K562 (cell line): ENCODE measurements at regions of chr20 and their contacts with region 1.

Region 1: DNA sequence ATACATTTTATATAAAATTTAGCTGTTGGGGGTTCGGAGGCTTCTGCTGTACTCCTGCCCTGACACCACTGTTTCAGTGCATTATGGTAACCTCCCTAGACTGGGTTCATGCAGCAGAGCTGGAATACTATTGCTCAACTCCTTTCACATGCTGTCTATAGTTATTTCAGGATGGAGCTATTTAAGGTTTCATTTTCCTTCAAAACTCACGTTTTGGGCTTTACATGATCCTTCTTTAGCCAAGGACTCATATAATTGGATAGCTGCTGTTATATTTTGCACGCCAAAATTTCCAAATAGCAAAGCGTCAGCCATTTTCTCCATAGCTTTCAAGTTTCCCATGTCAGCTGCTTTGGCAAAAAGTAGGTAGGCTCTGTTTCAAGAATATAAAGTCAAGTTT is 76.8 kb downstream of the SEL1L2 start:
- DNase-seq: no peak
- ATAC-seq: no peak
- H3K4me3 ChIP-seq: no peak overlapping the region
- H3K27ac ChIP-seq: no peak overlapping the region
- H3K4me1 ChIP-seq: peaks cover 0 to 7% of the 10 kb centered on the region in 2 experiments; a peak in 1 of 5 replicates
- H3K27me3 ChIP-seq: no peaks in the 10 kb centered on the region
- CTCF ChIP-seq: no peak
- EP300 ChIP-seq: no peak
- POLR2A ChIP-seq: no peak
- RAD21 ChIP-seq: no peak

Region 2: DNA sequence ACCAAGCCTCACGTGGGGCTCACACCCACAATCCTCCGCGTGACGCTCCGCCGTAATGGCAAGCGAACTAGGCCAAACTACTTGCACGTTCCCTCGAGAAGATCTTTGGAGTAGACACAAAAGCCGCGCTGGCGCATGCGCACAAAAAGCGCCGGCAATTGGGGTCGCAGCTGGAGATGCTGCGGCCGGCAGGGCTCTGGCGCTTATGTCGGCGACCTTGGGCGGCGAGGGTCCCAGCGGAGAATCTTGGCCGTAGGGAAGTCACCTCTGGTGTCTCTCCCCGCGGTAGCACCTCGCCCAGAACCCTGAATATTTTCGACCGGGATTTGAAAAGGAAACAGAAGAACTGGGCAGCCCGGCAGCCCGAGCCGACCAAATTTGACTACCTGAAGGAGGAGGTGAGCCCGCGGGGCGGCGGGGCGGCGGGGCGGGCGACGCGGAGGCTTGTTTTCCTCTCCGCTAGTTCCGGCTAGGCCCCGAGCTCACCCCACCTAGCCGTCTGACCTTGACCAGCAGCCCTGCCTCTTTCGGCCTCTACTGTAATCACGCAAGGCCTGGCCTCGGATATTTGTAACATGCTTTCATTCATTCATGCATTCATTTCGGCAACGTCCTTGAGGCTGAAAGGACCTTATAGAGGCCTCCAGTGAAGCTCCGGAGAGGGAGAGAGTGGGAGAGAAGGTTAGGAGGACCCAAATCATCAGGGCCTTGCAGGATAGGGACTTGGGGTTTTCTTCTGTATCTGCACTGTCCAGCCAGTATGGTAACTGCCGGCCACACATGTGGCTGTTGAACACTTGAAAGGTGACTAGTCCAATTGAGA is 128.5 kb before region 1 on chr20 and contains the starts of genes ESF1 and NDUFAF5:
- CTCF ChIA-PET with region 1: no interaction called
- POLR2A ChIA-PET with region 1: no interaction called
- in situ Hi-C with region 1: no loop called
- intact Hi-C with region 1: loop called (anchors 5 kb)
- DNase-seq: peak; percentile 74 to 95 (median 80)
- ATAC-seq: peak; percentile 92
- H3K4me3 ChIP-seq: peak within 1 kb of the TSS; percentile 73
- H3K27ac ChIP-seq: peak within 1 kb of the TSS; percentile 90
- H3K4me1 ChIP-seq: peaks cover 3 to 5% of the 10 kb centered on the region in 2 experiments; a peak in 3 of 5 replicates
- H3K27me3 ChIP-seq: no peaks in the 10 kb centered on the region
- CTCF ChIP-seq: no peak
- EP300 ChIP-seq: no peak; the same call in 1 of the 2 replicates
- POLR2A ChIP-seq: peak; percentile 79
- RAD21 ChIP-seq: no peak
- polyA plus RNA-seq, gene ESF1: 14.7 to 15.8 TPM
- polyA plus RNA-seq, gene NDUFAF5: 27.3 to 32.3 TPM

Region 3: GRCh38 chr20:14178952-14179351 is 265.4 kb after region 1 on chr20:
- CTCF ChIA-PET with region 1: no interaction called
- POLR2A ChIA-PET with region 1: no interaction called
- in situ Hi-C with region 1: no loop called
- intact Hi-C with region 1: no loop called
- DNase-seq: no peak
- ATAC-seq: no peak
- H3K4me3 ChIP-seq: no peak overlapping the region
- H3K27ac ChIP-seq: no peak overlapping the region
- H3K4me1 ChIP-seq: no peaks in the 10 kb centered on the region
- H3K27me3 ChIP-seq: no peaks in the 10 kb centered on the region
- CTCF ChIP-seq: no peak
- EP300 ChIP-seq: no peak
- POLR2A ChIP-seq: no peak
- RAD21 ChIP-seq: no peak

Region 4: DNA sequence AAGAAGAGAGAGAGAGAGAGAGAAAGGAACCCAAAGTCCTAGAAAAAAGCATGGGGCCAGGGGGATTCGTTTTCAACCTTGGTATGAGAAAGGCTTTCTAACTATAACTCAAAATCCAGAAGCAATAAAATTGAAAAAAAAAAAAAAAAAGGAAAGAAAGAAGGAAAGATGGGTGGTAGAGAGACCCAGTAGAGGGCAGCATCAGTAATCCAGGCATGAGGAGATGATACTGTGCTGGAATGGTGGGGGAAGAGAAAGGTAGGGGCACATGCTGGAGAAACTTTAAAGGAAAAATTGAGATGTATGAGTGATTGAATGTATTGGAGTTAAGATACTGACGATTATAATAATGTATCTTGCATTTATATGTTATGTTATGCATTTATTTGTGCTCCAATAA is 1464.6 kb after region 1 on chr20:
- CTCF ChIA-PET with region 1: no interaction called
- POLR2A ChIA-PET with region 1: no interaction called
- in situ Hi-C with region 1: no loop called
- intact Hi-C with region 1: no loop called
- DNase-seq: no peak
- ATAC-seq: no peak
- H3K4me3 ChIP-seq: no peak overlapping the region
- H3K27ac ChIP-seq: no peak overlapping the region
- H3K4me1 ChIP-seq: no peaks in the 10 kb centered on the region
- H3K27me3 ChIP-seq: no peaks in the 10 kb centered on the region
- CTCF ChIP-seq: no peak
- EP300 ChIP-seq: no peak
- POLR2A ChIP-seq: no peak
- RAD21 ChIP-seq: no peak